Tibial artery (tissue), 4 donors: ENCODE measurements at regions of chr11 and their contacts with region 1.

Region 1: DNA sequence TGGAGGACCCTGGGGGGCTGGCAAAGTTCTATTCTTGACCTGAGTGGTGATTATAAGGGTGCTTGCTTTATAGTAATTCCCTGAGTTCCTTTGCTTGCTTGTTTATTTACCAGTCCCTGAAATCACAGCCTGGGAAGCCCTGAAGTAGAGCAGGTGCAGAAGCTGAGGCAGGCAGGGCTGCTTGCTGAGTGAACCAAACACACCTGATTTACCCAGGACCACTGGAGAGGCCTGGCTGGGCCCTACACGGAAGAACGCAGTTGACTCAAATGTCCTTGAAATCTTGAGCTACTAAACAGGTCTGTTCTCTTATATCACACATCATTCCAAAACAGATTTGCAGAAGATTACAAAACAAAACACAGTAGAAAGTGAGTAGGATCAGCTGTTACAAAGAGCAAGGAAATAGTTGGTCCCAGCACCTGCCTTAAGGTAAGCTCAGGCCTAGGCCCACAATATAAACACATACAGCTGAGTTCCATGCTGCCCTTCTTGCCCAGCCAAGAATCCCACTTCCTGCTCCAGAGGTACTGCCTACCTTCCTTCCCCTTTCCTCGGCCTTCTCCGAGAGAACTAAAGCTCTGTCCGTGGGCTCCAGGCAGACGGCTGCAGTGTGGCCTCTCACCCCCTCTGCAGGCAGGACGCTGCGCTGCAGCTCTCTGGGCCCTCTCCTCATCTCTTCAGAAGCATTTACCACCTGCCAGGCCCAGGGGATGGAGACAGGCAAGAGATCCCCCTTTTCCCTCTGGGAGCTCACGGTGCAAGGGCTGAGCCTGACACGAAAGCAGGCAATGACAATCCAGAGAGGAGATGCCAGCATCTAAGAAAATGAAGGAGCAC is 46.1 kb upstream of the SCUBE2 start:
- DNase-seq: peak; percentile 74 to 83
- H3K4me3 ChIP-seq: no peak overlapping the region
- H3K27ac ChIP-seq: peak overlapping the region in 1 of 2 donors; percentile 37
- H3K4me1 ChIP-seq: peaks cover 0 to 27% (median 16%) of the 10 kb centered on the region in 4 donors
- H3K27me3 ChIP-seq: no peaks in the 10 kb centered on the region
- CTCF ChIP-seq: peak; percentile 91 to 96

Region 2: DNA sequence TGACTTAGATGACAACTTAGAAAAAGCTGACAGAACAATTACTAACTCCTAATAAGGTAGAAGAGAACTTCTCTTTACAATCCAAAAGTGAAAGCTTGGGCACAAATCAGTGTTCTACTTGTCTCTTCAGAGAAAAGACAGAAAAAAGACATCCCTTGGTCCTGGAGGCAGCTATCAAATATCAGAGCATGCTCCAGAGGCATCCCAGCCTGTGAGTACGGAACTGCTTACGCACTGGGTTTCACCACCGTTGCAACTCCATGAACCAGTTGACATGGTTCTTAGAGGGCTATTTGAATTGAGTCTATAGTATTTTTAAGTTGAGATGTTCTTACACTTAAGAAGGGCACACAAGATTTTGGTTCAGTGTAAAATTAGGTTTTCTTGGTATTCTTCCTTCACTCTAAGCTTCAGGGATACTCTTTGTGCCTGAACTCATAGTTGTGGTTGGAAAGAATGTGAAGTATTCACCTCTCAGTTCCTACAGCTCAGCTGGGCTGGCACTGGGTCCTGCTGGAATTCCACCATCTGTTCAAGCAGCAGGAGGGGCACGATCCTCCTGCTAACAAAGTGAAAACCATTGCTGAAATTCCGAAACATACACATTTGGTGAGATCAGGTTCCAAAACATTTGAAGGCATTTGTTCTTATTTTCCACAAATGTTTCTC is 220.2 kb before region 1 on chr11:
- intact Hi-C with region 1: loop called (anchors 5 kb)
- DNase-seq: no peak
- H3K4me3 ChIP-seq: peak overlapping the region; percentile 0 to 17
- H3K27ac ChIP-seq: peak overlapping the region; percentile 64 to 70
- H3K4me1 ChIP-seq: peaks cover 0 to 47% (median 34%) of the 10 kb centered on the region in 4 donors
- H3K27me3 ChIP-seq: no peaks in the 10 kb centered on the region
- CTCF ChIP-seq: no peak

Region 3: GRCh38 chr11:9014826-9015225 is 122.7 kb before region 1 on chr11:
- intact Hi-C with region 1: loop called (anchors 5 kb)
- DNase-seq: no peak
- H3K4me3 ChIP-seq: no peak overlapping the region
- H3K27ac ChIP-seq: no peak overlapping the region
- H3K4me1 ChIP-seq: no peaks in the 10 kb centered on the region
- H3K27me3 ChIP-seq: no peaks in the 10 kb centered on the region
- CTCF ChIP-seq: no peak

Region 4: GRCh38 chr11:9219572-9219971 is 82.1 kb after region 1 on chr11:
- intact Hi-C with region 1: no loop called
- DNase-seq: peak in 1 of 2 donors; percentile 25
- H3K4me3 ChIP-seq: no peak overlapping the region
- H3K27ac ChIP-seq: peak overlapping the region; percentile 27 to 39
- H3K4me1 ChIP-seq: peaks cover 0 to 32% (median 7%) of the 10 kb centered on the region in 4 donors
- H3K27me3 ChIP-seq: no peaks in the 10 kb centered on the region
- CTCF ChIP-seq: no peak

Region 5: DNA sequence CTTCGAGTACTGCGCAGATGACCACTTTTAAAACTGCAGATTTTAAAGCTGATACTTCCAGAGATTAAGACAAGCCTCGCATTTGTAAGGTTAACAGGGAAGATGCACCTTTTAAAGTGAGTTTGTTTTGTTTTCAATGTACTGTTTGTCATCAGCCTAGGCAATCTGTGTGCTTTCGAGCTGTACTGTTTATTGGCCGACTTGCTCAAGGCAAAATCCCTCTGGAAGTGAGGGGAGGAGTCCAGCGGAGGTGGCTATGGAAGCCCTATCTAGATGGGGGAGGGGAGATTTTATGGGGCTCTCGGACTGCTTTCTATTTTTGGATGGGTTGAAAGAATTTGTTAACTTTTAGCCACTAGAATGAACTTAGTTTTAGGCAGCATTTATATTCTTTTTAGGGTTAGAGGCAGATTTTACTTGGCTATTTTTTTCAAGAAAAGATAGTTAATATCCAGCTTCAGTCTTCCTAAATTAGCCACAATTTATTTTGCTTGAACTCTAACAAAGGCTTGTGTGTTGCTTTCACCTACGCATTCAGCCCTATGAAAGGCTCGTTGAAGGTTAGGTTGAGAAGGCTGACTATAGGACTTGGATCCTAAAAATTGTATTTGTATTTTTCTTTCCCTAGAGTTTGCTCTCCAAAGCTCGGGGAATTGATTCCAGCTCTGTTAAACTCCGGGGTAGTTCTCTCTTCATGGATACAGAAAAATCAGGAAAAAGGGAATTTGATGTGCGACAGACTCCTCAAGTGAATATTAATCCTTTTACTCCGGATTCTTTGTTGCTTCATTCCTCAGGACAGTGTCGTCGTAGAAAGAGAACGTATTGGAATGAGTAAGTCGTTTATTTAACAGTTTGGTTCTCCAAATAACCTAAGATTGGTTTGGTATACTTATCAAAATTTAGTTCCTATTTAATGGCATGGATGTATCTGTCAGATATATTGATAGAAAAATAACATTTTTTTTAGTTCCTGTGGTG is 438.0 kb after region 1 on chr11:
- intact Hi-C with region 1: no loop called
- DNase-seq: peak; percentile 71 to 85
- H3K4me3 ChIP-seq: peak overlapping the region; percentile 81 to 89
- H3K27ac ChIP-seq: peak overlapping the region; percentile 96 to 98
- H3K4me1 ChIP-seq: peaks cover 0 to 30% (median 9%) of the 10 kb centered on the region in 4 donors
- H3K27me3 ChIP-seq: no peaks in the 10 kb centered on the region
- CTCF ChIP-seq: no peak